K562 (cell line): ENCODE measurements at regions of chr12 and their contacts with region 1.

Region 1: DNA sequence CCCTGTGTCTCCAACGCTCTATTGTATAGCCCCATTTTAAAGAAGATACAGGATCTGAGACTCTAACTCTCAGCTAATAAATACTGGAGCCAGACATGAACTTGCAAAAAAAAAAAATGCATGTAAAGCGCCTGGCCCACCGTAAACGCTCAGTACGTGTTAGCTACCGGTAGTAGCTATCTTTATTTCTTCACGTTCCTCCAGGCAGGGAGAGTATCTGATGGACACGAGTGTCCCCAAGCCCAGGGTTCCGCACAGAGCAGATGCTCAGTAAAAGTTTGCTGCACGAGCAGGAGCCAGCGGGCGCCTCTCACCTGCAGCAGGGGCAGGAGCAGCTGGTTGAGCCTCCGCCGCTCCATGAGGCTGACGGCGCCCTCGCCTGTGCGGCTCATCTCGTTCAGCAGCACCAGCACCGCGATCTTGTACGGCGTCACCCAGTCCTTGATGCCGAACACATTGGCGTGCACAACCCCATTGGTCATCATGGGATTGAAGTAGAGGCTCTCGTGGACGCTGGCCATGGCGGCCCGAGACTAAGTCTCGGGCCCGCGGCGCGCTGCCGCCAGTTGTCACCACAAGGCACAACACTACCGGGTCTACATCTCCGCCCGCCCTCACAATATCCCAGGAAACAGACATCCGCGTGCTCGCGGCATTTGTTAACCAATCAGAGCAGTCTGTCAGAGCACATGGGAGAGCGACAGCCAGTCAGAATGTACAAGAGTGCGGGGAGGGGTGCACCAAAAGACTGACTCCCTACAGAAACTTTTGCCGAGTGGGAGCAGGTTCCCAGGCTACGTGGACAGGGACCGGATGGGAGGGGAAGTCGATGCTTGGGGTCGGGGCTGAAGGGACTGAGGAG is at the start of gene ANAPC5:
- DNase-seq: peak; percentile 94 to 99 (median 96)
- ATAC-seq: peak; percentile 97
- H3K4me3 ChIP-seq: peak within 1 kb of the TSS; percentile 53
- H3K27ac ChIP-seq: peak within 1 kb of the TSS; percentile 86
- H3K4me1 ChIP-seq: peaks cover 3 to 8% of the 10 kb centered on the region in 2 experiments; a peak in 2 of 5 replicates
- H3K27me3 ChIP-seq: no peaks in the 10 kb centered on the region
- CTCF ChIP-seq: 0 out of 6 replicates have a peak, but pooled peaks of 1 of the 3 experiments have one; percentile 12
- EP300 ChIP-seq: peak; percentile 37; the same call in 1 of the 2 replicates
- POLR2A ChIP-seq: peak; percentile 98
- RAD21 ChIP-seq: no peak; a peak in 1 of 4 replicates
- polyA plus RNA-seq, gene ANAPC5: 136 to 181 TPM

Region 2: DNA sequence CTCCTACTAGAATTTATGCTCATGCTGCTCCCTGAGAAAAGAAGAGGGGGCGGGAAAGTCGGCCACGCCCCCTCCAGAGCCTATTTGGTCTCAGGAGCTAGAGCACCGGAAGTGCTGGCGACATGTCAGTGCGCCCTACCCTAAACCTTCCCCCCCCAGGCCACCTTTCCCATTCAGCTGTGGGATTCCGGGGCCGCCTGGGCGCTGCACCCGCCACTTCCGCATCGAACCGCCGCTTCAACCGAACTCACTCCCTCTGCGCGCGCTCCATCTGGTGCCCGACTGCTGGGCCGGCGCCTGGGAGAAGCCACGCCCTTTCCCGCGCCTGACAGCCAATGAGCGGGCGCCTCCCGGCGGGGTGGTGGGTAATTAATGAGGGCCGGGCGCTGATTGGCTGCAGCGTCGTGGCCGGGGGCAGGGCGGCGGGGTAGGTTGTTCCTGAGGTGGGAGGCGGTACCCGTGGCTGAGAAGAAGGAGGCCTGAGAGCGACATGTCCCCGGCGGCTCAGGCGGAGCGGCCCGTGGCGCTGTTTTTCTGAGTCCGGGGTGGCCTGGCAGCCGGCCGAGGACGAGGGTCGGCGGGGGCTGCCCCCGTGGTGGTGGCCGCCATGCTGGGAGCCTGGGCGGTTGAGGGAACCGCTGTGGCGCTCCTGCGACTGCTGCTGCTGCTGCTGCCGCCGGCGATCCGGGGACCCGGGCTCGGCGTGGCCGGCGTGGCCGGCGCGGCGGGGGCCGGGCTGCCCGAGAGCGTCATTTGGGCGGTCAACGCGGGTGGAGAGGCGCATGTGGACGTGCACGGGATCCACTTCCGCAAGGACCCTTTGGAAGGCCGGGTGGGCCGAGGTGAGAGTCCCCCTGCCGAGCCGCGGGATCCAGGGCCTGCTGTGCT is 665.1 kb before region 1 on chr12 and contains the start of gene MLEC:
- CTCF ChIA-PET with region 1: no interaction called
- POLR2A ChIA-PET with region 1: no interaction called
- in situ Hi-C with region 1: no loop called
- intact Hi-C with region 1: no loop called
- DNase-seq: peak; percentile 98 to 100 (median 100)
- ATAC-seq: peak; percentile 92
- H3K4me3 ChIP-seq: peak within 1 kb of the TSS; percentile 91
- H3K27ac ChIP-seq: peak within 1 kb of the TSS; percentile 91
- H3K4me1 ChIP-seq: peaks cover 14 to 17% of the 10 kb centered on the region in 2 experiments; a peak in 3 of 5 replicates
- H3K27me3 ChIP-seq: no peaks in the 10 kb centered on the region
- CTCF ChIP-seq: peak; percentile 26 to 65 (median 52); a peak in 4 of 6 replicates
- EP300 ChIP-seq: peak; percentile 70
- POLR2A ChIP-seq: peak; percentile 80
- RAD21 ChIP-seq: peak; percentile 49 to 65
- polyA plus RNA-seq, gene MLEC: 18.5 to 20.5 TPM

Region 3: GRCh38 chr12:121364683-121365121 is 12.7 kb after region 1 on chr12:
- CTCF ChIA-PET with region 1: no interaction called
- POLR2A ChIA-PET with region 1: interaction called, 19 read pairs
- in situ Hi-C with region 1: no loop called
- intact Hi-C with region 1: no loop called
- DNase-seq: no peak
- ATAC-seq: no peak
- H3K4me3 ChIP-seq: no peak overlapping the region
- H3K27ac ChIP-seq: no peak overlapping the region
- H3K4me1 ChIP-seq: peaks cover 0 to 8% of the 10 kb centered on the region in 2 experiments; a peak in 3 of 5 replicates
- H3K27me3 ChIP-seq: no peaks in the 10 kb centered on the region
- CTCF ChIP-seq: no peak
- EP300 ChIP-seq: no peak
- POLR2A ChIP-seq: no peak
- RAD21 ChIP-seq: no peak

Region 4: DNA sequence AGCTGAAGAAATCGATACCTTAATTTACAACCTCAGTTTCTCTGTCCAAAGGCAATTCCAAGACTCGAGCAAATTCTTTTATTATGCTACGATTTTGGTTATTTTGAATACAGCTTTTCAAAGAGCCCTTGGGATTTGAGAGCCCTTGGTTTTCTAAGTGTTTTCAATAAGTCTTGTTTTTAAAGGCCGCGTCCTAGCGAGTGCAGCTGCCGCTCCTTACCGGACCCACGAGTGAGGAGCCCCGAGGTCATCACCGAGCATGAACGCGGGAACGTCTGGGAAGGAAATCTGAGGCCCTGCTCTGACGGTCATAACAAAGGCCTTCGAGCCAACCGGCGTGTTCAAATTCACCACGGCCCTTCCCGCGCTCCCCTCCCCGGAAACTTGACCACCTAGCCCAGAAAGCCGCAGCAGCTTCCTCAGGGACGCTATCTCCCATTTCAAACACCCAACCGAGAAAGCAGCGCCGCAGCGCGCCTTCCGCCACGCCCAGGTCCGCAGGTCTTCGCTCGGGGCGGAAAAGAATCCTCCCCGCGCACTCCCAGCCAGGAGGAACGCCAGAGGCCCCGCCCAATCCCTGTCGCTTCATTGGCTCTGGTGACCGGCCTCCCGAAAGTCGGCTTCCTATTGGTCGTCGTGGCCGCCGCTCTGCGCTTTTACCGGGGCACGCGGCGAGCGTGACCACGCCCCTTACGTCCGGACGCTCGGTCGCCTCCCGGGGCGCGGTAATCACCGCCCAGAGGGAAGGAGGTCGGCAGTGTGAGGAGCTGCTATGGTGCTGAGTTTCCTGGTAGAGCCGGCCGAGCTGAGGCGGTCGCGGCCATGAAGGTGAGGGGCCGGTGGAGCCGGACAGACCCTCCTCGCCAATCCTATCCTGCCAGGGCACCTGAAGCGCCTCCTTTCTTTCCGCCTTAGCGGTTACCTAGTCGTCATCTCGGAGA is 47.6 kb after region 1 on chr12 and contains the start of gene RNF34:
- CTCF ChIA-PET with region 1: no interaction called
- POLR2A ChIA-PET with region 1: interaction called, 17 read pairs
- in situ Hi-C with region 1: no loop called
- intact Hi-C with region 1: loop called (anchors 1 kb)
- DNase-seq: peak; percentile 98 to 100 (median 99)
- ATAC-seq: peak; percentile 97
- H3K4me3 ChIP-seq: peak within 1 kb of the TSS; percentile 77
- H3K27ac ChIP-seq: peak within 1 kb of the TSS; percentile 90
- H3K4me1 ChIP-seq: peaks cover 0 to 16% of the 10 kb centered on the region in 2 experiments; a peak in 3 of 5 replicates
- H3K27me3 ChIP-seq: no peaks in the 10 kb centered on the region
- CTCF ChIP-seq: peak in 1 of 3 experiments; percentile 0; a peak in 1 of 6 replicates
- EP300 ChIP-seq: no peak; the same call in 1 of the 2 replicates
- POLR2A ChIP-seq: peak; percentile 98
- RAD21 ChIP-seq: no peak
- polyA plus RNA-seq, gene RNF34: 65.4 to 88.9 TPM

Region 5: GRCh38 chr12:121423682-121424623 is 71.9 kb after region 1 on chr12:
- CTCF ChIA-PET with region 1: no interaction called
- POLR2A ChIA-PET with region 1: interaction called, 12 read pairs
- in situ Hi-C with region 1: no loop called
- intact Hi-C with region 1: no loop called
- DNase-seq: no peak
- ATAC-seq: no peak
- H3K4me3 ChIP-seq: no peak overlapping the region
- H3K27ac ChIP-seq: peak overlapping the region; percentile 56; the same call in 1 of the 3 replicates
- H3K4me1 ChIP-seq: peaks cover 8 to 10% of the 10 kb centered on the region in 2 experiments; a peak in 4 of 5 replicates
- H3K27me3 ChIP-seq: no peaks in the 10 kb centered on the region
- CTCF ChIP-seq: no peak
- EP300 ChIP-seq: no peak
- POLR2A ChIP-seq: no peak
- RAD21 ChIP-seq: no peak